Dendritic cell treated with granulocyte-macrophage colony-stimulating factor and Interleukin-4, amounts not matched to agents 40 ng/mL and 50 ng/mL, for 4 days (primary cell): ENCODE measurements at regions of chr20 and their contacts with region 1.

Region 1: GRCh38 chr20:35092524-35093266 is at the start of gene TRPC4AP:
- H3K4me3 Mint-ChIP-seq: peak within 1 kb of the TSS; percentile 87
- H3K27ac Mint-ChIP-seq: peak within 1 kb of the TSS; percentile 97
- H3K4me1 Mint-ChIP-seq: peaks cover 43% of the 10 kb centered on the region
- H3K27me3 Mint-ChIP-seq: no peaks in the 10 kb centered on the region

Region 2: DNA sequence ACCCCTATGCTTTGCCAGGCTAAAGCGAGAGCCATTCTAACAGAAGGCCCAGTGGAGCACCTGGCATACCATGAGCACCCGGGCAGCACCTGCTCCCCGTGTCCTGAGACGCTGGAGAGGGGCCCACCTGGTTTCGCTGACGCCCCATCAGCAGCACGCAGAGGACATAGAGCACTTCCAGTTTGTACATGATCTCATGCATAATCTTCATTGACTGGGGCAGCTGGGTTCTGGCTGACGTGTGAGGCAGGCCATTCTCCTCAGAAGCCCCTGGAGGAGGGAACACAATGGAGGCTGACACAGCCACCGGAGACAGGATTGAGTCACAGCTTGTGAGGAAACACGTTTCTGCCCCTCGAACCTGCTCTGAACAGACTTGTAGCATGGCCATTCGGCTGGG is 71.6 kb before region 1 on chr20:
- intact Hi-C with region 1: no loop called
- H3K4me3 Mint-ChIP-seq: no peak overlapping the region
- H3K27ac Mint-ChIP-seq: no peak overlapping the region
- H3K4me1 Mint-ChIP-seq: no peaks in the 10 kb centered on the region
- H3K27me3 Mint-ChIP-seq: no peaks in the 10 kb centered on the region

Region 3: GRCh38 chr20:35034145-35034544 is 58.5 kb before region 1 on chr20:
- intact Hi-C with region 1: no loop called
- H3K4me3 Mint-ChIP-seq: no peak overlapping the region
- H3K27ac Mint-ChIP-seq: no peak overlapping the region
- H3K4me1 Mint-ChIP-seq: peaks cover 7% of the 10 kb centered on the region
- H3K27me3 Mint-ChIP-seq: no peaks in the 10 kb centered on the region

Region 4: GRCh38 chr20:35146920-35147574 is 54.4 kb after region 1 on chr20 and contains the start of gene EDEM2:
- intact Hi-C with region 1: loop called (anchors 5 kb)
- H3K4me3 Mint-ChIP-seq: peak within 1 kb of the TSS; percentile 84
- H3K27ac Mint-ChIP-seq: peak within 1 kb of the TSS; percentile 96
- H3K4me1 Mint-ChIP-seq: peaks cover 46% of the 10 kb centered on the region
- H3K27me3 Mint-ChIP-seq: no peaks in the 10 kb centered on the region

Region 5: GRCh38 chr20:35207950-35208611 is 115.4 kb after region 1 on chr20:
- intact Hi-C with region 1: loop called (anchors 1 kb)
- H3K4me3 Mint-ChIP-seq: no peak overlapping the region
- H3K27ac Mint-ChIP-seq: no peak overlapping the region
- H3K4me1 Mint-ChIP-seq: no peaks in the 10 kb centered on the region
- H3K27me3 Mint-ChIP-seq: no peaks in the 10 kb centered on the region

Region 6: DNA sequence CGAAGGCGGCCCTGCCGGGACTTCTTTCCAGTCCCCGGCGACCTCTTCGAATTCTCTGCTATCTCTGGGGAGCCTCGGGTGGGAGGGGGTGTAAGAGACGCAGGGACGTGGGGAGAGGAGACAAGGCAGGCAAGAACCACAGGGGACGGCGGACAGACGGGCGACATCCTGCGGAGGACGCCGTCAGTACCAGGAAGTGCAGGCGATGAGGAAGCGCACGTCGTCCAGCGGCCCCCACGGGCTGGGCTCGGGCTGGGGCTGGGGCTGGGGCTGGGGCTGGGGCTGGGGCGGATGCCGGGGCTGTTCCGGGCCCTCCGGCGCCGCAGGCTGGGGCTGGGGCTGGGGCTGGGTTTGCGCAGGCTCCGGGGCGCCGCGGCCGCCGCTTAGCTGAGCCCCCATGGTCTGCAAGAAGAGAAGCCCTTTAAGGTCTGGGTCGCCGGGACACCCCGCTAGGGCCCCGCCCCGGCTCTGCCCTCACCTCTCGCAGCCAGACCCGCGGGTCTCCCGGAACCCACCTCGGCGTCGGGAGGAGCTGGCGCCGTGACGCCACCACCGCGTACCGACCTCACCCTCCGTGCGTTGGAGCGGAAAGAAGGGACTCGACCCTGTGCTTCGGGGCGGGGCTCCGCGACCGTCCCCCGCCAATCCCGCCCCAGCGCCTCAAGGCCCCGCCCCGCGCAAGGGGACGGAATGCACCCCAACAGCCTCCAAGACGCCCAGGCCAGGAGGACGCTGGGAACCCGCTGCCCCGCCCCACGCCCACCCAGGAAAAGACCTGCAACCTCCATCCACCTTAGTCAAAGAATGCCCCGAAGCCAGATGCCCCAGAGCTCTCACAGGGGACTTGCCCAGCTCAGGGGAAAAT is 185.1 kb after region 1 on chr20 and contains the start of gene MMP24OS:
- intact Hi-C with region 1: loop called (anchors 5 kb)
- H3K4me3 Mint-ChIP-seq: peak within 1 kb of the TSS; percentile 100
- H3K27ac Mint-ChIP-seq: peak within 1 kb of the TSS; percentile 94
- H3K4me1 Mint-ChIP-seq: peaks cover 58% of the 10 kb centered on the region
- H3K27me3 Mint-ChIP-seq: no peaks in the 10 kb centered on the region